IMR-90 (cell line): ENCODE measurements at regions of chr7 and their contacts with region 1.

Region 1: GRCh38 chr7:129825496-129826267 is 127.1 kb downstream of the UBE2H start:
- DNase-seq: peak; percentile 43
- ATAC-seq: peak; percentile 87
- H3K4me3 ChIP-seq: peak overlapping the region; percentile 96
- H3K27ac ChIP-seq: peak overlapping the region; percentile 71
- H3K4me1 ChIP-seq: peaks cover 10% of the 10 kb centered on the region
- H3K27me3 ChIP-seq: no peaks in the 10 kb centered on the region
- CTCF ChIP-seq: peak; percentile 57
- POLR2A ChIP-seq: no peak
- RAD21 ChIP-seq: peak; percentile 64

Region 2: DNA sequence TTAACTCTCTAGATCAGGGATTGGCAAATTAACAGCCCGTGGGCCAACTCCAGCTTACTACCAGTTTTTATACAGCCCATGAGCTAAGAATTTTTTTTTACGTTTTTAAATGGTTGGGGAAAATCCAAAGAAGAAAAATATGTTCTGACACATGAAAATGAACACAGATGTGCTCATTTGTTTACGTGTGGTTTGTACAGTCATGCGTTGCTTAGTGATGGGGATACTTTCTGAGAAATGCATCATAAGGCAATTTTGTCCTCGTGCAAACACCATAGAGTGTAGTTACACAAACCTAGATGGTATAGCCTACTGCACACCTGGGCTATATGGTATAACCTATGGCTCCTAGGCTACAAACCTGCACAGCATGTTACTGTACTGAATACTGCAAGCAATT is 331.6 kb before region 1 on chr7:
- CTCF ChIA-PET with region 1: no interaction called
- POLR2A ChIA-PET with region 1: no interaction called
- dilution Hi-C with region 1: no loop called
- in situ Hi-C with region 1: no loop called
- intact Hi-C with region 1: loop called (anchors 10 kb)
- DNase-seq: peak; percentile 98
- ATAC-seq: peak; percentile 87
- H3K4me3 ChIP-seq: no peak overlapping the region
- H3K27ac ChIP-seq: no peak overlapping the region
- H3K4me1 ChIP-seq: peaks cover 7% of the 10 kb centered on the region; the same call in 1 of the 2 replicates
- H3K27me3 ChIP-seq: peaks cover 4% of the 10 kb centered on the region; the same call in 1 of the 2 replicates
- CTCF ChIP-seq: no peak
- POLR2A ChIP-seq: no peak
- RAD21 ChIP-seq: no peak

Region 3: DNA sequence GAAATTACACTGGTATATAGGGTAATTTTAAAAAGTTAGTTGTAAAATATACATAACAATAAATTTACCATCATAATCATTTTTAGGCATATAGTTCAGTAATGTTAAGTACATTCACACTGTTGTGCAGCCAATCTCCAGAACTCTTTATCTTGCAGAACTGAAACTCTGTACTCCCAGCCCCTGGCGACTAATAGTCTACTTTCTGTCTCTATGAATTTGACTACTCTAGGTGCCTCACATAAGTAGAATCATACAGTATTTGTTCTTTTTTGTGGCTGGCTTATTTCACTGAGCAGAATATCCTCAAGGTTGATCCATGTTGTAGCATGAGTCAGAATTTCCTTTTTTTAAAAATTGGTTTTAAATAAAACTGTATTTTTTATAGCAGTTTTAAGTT is 172.8 kb before region 1 on chr7:
- CTCF ChIA-PET with region 1: no interaction called
- POLR2A ChIA-PET with region 1: no interaction called
- dilution Hi-C with region 1: no loop called
- in situ Hi-C with region 1: no loop called
- intact Hi-C with region 1: no loop called
- DNase-seq: no peak
- ATAC-seq: no peak
- H3K4me3 ChIP-seq: no peak overlapping the region
- H3K27ac ChIP-seq: no peak overlapping the region
- H3K4me1 ChIP-seq: peaks cover 4% of the 10 kb centered on the region
- H3K27me3 ChIP-seq: no peaks in the 10 kb centered on the region
- CTCF ChIP-seq: no peak
- POLR2A ChIP-seq: no peak
- RAD21 ChIP-seq: no peak

Region 4: GRCh38 chr7:129664029-129665012 is 161.4 kb before region 1 on chr7:
- CTCF ChIA-PET with region 1: interaction called, 9 read pairs
- POLR2A ChIA-PET with region 1: no interaction called
- dilution Hi-C with region 1: no loop called
- in situ Hi-C with region 1: loop called (anchors 5 kb)
- intact Hi-C with region 1: loop called (anchors 1 kb)
- DNase-seq: peak; percentile 83
- ATAC-seq: peak; percentile 93
- H3K4me3 ChIP-seq: no peak overlapping the region
- H3K27ac ChIP-seq: no peak overlapping the region
- H3K4me1 ChIP-seq: peaks cover 4% of the 10 kb centered on the region; the same call in 1 of the 2 replicates
- H3K27me3 ChIP-seq: no peaks in the 10 kb centered on the region
- CTCF ChIP-seq: peak; percentile 78
- POLR2A ChIP-seq: no peak
- RAD21 ChIP-seq: peak; percentile 88

Region 5: GRCh38 chr7:129848436-129848835 is 22.8 kb after region 1 on chr7:
- CTCF ChIA-PET with region 1: no interaction called
- POLR2A ChIA-PET with region 1: no interaction called
- dilution Hi-C with region 1: no loop called
- in situ Hi-C with region 1: no loop called
- intact Hi-C with region 1: no loop called
- DNase-seq: no peak
- ATAC-seq: no peak
- H3K4me3 ChIP-seq: no peak overlapping the region
- H3K27ac ChIP-seq: no peak overlapping the region
- H3K4me1 ChIP-seq: peaks cover 14% of the 10 kb centered on the region
- H3K27me3 ChIP-seq: no peaks in the 10 kb centered on the region
- CTCF ChIP-seq: no peak
- POLR2A ChIP-seq: no peak
- RAD21 ChIP-seq: no peak